ENCODE measurements at regions of chr18 and their contacts with region 1.

Region 1: GRCh38 chr18:62131301-62131909 is 55.5 kb downstream of the PIGN start:
- DNase-seq: peak; percentile 30
- CTCF ChIP-seq: peak; percentile 75

Region 2: GRCh38 chr18:61581578-61582201 is 549.7 kb before region 1 on chr18:
- in situ Hi-C with region 1: loop called (anchors 25 kb)
- DNase-seq: peak; percentile 84
- CTCF ChIP-seq: peak; percentile 88

Region 3: DNA sequence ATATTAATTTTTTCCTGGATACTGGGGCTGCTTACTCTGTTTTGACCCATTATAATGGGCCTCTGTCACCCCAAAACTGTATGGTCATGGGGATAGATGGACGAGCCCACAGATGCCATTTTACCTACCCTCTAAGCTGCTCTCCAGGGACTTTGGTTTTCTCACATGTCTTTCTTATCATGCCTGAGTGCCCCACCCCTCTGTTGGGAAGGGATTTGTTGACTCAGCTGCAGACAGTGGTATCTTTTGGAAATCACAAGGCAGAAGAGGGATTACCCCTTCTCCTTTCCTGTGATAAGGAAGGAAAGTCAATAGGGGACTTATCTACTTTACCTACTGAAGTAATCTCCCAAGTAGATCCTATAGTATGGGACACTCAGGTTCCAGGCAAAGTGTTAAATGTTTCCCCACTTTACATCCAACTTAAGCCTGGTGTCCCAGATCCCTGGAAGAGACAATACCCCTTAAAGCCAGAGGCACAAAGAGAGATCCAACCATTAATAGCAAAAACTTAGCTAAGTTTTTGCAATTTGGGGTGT is 421.3 kb before region 1 on chr18:
- in situ Hi-C with region 1: no loop called
- DNase-seq: no peak
- CTCF ChIP-seq: no peak

Region 4: GRCh38 chr18:63155169-63155852 is 1023.9 kb after region 1 on chr18:
- in situ Hi-C with region 1: no loop called
- DNase-seq: peak; percentile 68
- CTCF ChIP-seq: peak; percentile 86

Measured in GM13976 (cell line).